Activated CD4-positive, alpha-beta T cell treated with anti-CD3 and anti-CD28 coated beads for 36 hours (primary cell): ENCODE measurements at regions of chr11 and their contacts with region 1.

Region 1: DNA sequence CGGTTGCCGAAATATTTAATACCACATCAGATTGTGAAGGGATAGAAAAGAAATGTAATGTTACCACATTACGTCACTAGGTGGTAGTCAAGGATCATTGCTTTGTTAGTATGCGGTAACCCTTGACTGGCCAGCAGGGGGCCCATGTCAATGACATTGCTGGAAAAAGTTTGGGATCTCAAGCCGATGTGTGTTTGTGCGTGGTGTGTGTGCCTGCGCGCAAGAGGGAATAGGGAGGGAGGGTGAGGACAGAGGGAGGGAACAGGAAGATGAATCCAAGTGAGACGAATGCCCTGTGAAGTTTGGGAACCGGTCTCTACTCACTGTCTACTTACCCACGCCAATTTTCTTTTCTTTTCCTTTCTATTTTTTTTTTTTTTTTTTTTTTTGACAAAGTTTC is 10.7 kb upstream of the MRGPRX2 start:
- DNase-seq: peak; percentile 77
- ATAC-seq: peak; percentile 93
- H3K4me3 Mint-ChIP-seq: peak overlapping the region; percentile 38
- H3K27ac Mint-ChIP-seq: no peak overlapping the region
- H3K4me1 Mint-ChIP-seq: peaks cover 4% of the 10 kb centered on the region
- H3K27me3 Mint-ChIP-seq: peaks cover 20% of the 10 kb centered on the region

Region 2: DNA sequence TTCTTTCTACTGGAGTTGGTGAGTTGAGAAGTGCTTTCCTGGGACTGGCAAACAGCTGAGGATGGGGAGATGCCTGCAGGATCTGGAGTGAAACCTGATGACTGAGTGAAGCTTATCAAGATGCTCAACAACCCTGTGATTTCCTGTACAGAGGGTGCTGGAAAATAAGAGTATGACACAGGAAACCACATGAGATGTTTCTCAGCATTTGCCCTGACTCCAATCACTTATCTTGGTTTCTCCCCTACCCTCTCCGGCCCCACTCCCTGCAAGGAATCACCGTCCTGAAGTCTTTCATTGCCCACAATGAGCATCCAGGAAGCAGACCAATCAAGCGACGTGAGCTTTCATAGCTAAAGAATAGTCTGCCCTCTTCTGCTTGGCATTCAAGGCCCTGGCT is 10.6 kb before region 1 on chr11 and contains the start of gene MRGPRX2:
- CTCF ChIA-PET with region 1: interaction called, 30 read pairs
- POLR2A ChIA-PET with region 1: no interaction called
- intact Hi-C with region 1: no loop called
- DNase-seq: peak; percentile 52
- ATAC-seq: peak; percentile 91
- H3K4me3 Mint-ChIP-seq: no peak within 1 kb of the TSS
- H3K27ac Mint-ChIP-seq: peak within 1 kb of the TSS; percentile 20
- H3K4me1 Mint-ChIP-seq: peaks cover 19% of the 10 kb centered on the region
- H3K27me3 Mint-ChIP-seq: peaks cover 15% of the 10 kb centered on the region
- total RNA-seq, gene MRGPRX2: not detected

Region 3: DNA sequence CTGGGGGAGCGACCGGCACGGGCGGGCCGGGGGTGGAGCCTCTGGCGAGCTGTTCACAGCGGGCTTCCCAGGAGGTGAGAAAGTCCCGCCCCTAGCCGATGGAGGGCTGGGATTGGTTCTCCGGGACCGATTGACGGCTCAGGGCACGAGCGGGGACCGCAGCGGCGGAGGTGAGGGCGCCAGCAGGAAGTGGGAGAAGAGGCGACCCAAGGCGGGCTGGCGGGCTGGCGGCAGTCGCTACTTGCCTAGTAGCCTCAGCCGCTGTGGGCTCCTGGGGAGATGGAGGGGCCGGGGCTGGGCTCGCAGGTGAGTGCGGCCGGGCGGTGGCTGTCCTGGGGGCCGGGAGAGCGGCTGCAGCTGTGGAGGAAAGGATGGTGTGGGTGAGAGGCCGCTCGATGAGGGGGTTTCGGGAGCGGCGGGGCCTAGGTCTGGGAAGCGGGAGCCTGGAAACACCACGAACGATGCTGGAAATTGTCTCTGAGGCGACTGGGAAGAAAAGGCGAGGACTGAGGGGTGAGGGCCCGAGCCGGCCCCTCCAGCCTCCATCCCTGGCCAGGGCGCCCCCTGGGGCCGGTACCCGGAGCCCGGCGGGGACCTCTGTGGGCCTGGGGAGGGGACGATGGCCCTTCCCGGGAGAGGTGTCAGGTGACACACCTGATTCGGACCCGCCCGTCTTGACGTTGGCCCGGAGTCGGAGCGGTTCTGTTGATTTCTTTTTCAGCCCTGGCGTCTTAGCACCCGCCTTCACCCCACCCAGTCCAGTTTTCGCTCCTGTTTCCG is 45.9 kb after region 1 on chr11 and contains the start of gene ZDHHC13:
- CTCF ChIA-PET with region 1: interaction called, 16 read pairs
- POLR2A ChIA-PET with region 1: no interaction called
- intact Hi-C with region 1: loop called (anchors 2 to 5 kb)
- DNase-seq: peak; percentile 97
- ATAC-seq: peak; percentile 99
- H3K4me3 Mint-ChIP-seq: peak within 1 kb of the TSS; percentile 89
- H3K27ac Mint-ChIP-seq: peak within 1 kb of the TSS; percentile 87
- H3K4me1 Mint-ChIP-seq: peaks cover 51% of the 10 kb centered on the region
- H3K27me3 Mint-ChIP-seq: no peaks in the 10 kb centered on the region
- total RNA-seq, gene ZDHHC13: 22.9 to 25.9 TPM

Region 4: DNA sequence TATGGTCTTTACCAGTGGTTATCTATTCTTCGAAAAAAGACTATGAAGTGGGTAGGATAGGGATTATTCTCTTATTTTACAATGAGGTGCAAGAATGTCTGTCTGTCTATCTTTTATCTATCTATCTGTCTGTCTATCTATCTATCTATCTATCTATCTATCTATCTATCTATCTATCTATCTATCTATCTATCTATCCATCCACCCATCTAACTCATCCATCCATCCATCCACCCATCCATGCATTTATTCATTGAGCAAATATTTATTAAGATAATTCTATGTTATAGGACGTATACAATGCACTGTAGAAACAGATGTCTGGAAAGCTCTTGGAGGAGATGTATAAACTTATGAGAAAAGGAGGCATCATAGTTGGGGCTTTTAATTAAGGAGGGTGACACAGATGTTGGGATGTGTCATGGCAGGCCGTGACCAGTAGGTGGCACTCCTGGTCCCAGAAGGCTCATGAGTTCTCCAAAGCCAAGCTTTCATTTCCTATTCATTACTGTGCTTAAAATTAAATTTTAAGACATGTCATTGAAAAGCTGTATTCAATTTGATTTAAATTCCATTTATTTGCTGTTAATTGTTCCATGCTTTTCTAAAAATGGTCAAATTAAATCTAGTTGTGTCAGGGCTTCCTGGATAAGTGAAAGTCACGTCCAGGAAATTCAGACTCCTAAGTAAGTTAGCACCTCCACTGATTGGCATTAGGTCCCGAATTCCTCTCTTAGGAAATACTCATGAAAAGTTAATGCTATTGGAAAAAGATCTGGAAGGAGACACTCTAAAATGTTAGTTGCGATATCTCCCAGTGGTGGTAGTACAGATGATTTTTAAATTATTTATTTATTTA is 188.5 kb after region 1 on chr11:
- CTCF ChIA-PET with region 1: interaction called, 12 read pairs
- POLR2A ChIA-PET with region 1: no interaction called
- intact Hi-C with region 1: loop called in 1 of 2 experiments (anchors 5 kb)
- DNase-seq: peak; percentile 81
- ATAC-seq: peak; percentile 76
- H3K4me3 Mint-ChIP-seq: no peak overlapping the region
- H3K27ac Mint-ChIP-seq: no peak overlapping the region
- H3K4me1 Mint-ChIP-seq: no peaks in the 10 kb centered on the region
- H3K27me3 Mint-ChIP-seq: peaks cover 2% of the 10 kb centered on the region

Region 5: DNA sequence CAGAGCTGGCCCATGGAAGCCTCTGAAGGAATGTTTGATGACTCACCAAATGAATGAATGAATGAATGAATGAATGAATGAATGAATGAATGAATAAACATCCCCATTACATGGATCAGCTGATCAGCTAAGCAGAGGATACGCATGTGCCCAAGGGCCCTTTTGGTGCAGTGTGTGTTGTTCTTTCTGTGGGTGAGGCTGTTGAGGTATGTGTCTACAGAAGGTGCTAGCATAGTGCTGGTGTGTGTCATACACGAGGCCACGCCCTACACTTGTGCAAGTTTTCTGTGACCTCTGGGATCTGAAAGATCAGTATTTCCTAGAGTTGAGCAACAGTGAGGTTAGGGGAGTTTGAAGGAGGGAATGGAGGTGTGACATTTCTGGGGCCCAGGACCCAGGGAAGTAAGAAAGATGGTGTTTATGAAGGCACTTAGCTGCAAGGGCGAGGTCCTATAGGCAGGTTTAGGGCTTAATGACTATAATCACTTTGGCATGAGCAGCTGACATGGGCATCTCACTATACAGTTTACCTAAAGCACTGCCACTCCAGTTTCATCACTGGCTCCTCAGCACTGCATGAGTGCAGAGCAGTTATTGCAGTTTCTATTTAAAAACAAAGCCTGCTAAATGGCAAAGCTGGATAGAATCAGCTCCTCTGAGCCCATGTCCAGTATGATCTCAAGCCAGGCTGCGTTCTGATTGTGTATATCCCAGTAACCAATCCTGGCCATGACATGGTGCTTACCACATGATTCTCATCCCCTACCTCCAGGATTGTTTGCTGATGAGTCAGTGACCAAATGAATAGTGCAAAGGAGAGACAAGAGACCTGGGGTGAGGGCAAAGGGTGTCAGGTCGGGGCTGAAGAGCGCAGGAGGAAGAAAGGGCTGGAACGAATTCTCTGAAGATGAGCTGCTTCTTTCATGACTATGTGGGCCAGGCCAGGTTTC is 205.9 kb after region 1 on chr11:
- CTCF ChIA-PET with region 1: no interaction called
- POLR2A ChIA-PET with region 1: no interaction called
- intact Hi-C with region 1: no loop called
- DNase-seq: peak; percentile 6
- ATAC-seq: no peak
- H3K4me3 Mint-ChIP-seq: no peak overlapping the region
- H3K27ac Mint-ChIP-seq: no peak overlapping the region
- H3K4me1 Mint-ChIP-seq: no peaks in the 10 kb centered on the region
- H3K27me3 Mint-ChIP-seq: peaks cover 2% of the 10 kb centered on the region

Region 6: GRCh38 chr11:19553683-19554333 is 482.6 kb after region 1 on chr11:
- CTCF ChIA-PET with region 1: interaction called, 6 read pairs
- POLR2A ChIA-PET with region 1: no interaction called
- intact Hi-C with region 1: loop called (anchors 1 kb)
- DNase-seq: peak; percentile 90
- ATAC-seq: peak; percentile 86
- H3K4me3 Mint-ChIP-seq: no peak overlapping the region
- H3K27ac Mint-ChIP-seq: no peak overlapping the region
- H3K4me1 Mint-ChIP-seq: peaks cover 2% of the 10 kb centered on the region
- H3K27me3 Mint-ChIP-seq: peaks cover 10% of the 10 kb centered on the region

Region 7: DNA sequence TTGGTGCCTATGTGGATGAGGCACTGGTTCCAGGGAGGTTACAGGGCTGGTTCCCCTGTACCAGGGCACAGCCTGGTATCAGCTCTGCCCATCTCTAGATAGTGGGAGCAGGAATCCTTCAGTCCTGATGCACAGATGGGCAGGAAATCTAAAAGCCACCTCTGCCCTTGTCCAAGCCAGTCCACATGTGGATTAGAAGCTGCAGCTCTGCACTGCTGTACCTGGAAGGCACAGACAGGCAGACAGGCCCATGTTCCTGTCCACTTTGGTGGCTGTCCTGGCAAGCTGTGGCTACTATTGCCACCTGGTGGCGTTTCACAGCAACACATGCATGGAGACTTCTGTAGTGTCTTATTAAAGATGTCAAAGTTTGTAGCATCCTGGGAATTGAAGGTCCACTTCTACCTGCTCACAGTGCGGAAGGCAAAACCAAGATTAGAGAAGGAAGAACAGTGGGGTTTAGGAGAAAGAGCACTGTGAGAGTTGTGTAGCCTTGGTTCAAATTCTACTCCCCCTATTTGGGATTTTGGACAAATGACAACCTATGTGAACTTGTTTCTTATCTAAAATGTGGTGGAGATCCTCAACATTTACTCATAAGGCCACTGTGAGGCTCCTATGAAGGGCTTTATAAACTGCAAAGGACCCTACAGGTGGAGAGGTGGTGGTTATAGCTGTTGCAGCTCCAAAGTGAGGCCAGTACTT is 671.5 kb after region 1 on chr11:
- CTCF ChIA-PET with region 1: interaction called, 4 read pairs
- POLR2A ChIA-PET with region 1: no interaction called
- intact Hi-C with region 1: loop called in 1 of 2 experiments (anchors 1 kb)
- DNase-seq: peak; percentile 82
- ATAC-seq: peak; percentile 78
- H3K4me3 Mint-ChIP-seq: no peak overlapping the region
- H3K27ac Mint-ChIP-seq: no peak overlapping the region
- H3K4me1 Mint-ChIP-seq: no peaks in the 10 kb centered on the region
- H3K27me3 Mint-ChIP-seq: peaks cover 2% of the 10 kb centered on the region

Region 8: GRCh38 chr11:19903620-19904069 is 832.4 kb after region 1 on chr11:
- CTCF ChIA-PET with region 1: interaction called, 3 read pairs
- POLR2A ChIA-PET with region 1: no interaction called
- intact Hi-C with region 1: loop called in 1 of 2 experiments (anchors 1 kb)
- DNase-seq: peak; percentile 77
- ATAC-seq: no peak
- H3K4me3 Mint-ChIP-seq: no peak overlapping the region
- H3K27ac Mint-ChIP-seq: no peak overlapping the region
- H3K4me1 Mint-ChIP-seq: no peaks in the 10 kb centered on the region
- H3K27me3 Mint-ChIP-seq: peaks cover 2% of the 10 kb centered on the region